ENCODE measurements at regions of chr3 and their contacts with region 1.

Region 1: GRCh38 chr3:52253314-52254304 is 8.1 kb downstream of the PPM1M start:
- DNase-seq: peak; percentile 70 to 97 (median 87)
- ATAC-seq: peak; percentile 86
- H3K4me3 ChIP-seq: peak overlapping the region; percentile 25 to 32
- H3K4me3 Mint-ChIP-seq: peak overlapping the region; percentile 84
- H3K27ac ChIP-seq: peak overlapping the region; percentile 76 to 92
- H3K27ac Mint-ChIP-seq: peak overlapping the region; percentile 100
- H3K4me1 ChIP-seq: peaks cover 96% of the 10 kb centered on the region
- H3K4me1 Mint-ChIP-seq: peaks cover 93% of the 10 kb centered on the region
- H3K27me3 ChIP-seq: no peaks in the 10 kb centered on the region
- H3K27me3 Mint-ChIP-seq: no peaks in the 10 kb centered on the region
- CTCF ChIP-seq: no peak

Region 2: GRCh38 chr3:52014613-52015012 is 239.0 kb before region 1 on chr3:
- CTCF ChIA-PET with region 1: no interaction called
- POLR2A ChIA-PET with region 1: no interaction called
- intact Hi-C with region 1: no loop called
- DNase-seq: no peak
- ATAC-seq: no peak
- H3K4me3 ChIP-seq: no peak overlapping the region
- H3K4me3 Mint-ChIP-seq: no peak overlapping the region
- H3K27ac ChIP-seq: no peak overlapping the region
- H3K27ac Mint-ChIP-seq: no peak overlapping the region
- H3K4me1 ChIP-seq: no peaks in the 10 kb centered on the region
- H3K4me1 Mint-ChIP-seq: no peaks in the 10 kb centered on the region
- H3K27me3 ChIP-seq: no peaks in the 10 kb centered on the region
- H3K27me3 Mint-ChIP-seq: no peaks in the 10 kb centered on the region
- CTCF ChIP-seq: no peak

Region 3: DNA sequence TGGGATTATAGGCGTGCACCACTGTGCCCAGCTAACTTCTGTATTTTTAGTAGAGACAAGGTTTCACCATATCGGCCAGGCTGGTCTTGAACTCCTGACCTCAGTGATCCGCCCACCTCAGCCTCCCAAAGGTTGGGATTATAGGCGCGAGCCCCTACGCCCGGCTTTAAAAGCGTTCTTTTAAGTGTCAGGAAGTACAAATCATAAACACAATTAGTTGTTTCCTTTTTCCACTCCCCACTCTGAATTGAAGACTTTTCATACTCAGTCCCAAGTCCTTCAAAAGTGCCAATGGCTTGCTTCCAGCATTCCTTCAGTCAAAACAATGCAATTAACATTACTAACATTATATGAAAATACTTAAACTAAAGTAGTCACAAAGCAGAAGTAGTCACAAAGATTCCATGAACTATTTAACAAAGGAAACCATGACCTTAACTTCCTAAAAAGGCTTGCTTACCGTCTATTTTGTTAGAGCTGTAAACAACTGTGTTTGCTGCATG is 16.7 kb after region 1 on chr3:
- CTCF ChIA-PET with region 1: interaction called, 622 read pairs
- POLR2A ChIA-PET with region 1: interaction called, 685 read pairs
- intact Hi-C with region 1: loop called in 1 of 2 experiments (anchors 1 kb)
- DNase-seq: no peak
- ATAC-seq: no peak
- H3K4me3 ChIP-seq: peak overlapping the region in 1 of 2 experiments; percentile 10
- H3K4me3 Mint-ChIP-seq: peak overlapping the region; percentile 82
- H3K27ac ChIP-seq: peak overlapping the region; percentile 34 to 68
- H3K27ac Mint-ChIP-seq: peak overlapping the region; percentile 95
- H3K4me1 ChIP-seq: peaks cover 73% of the 10 kb centered on the region
- H3K4me1 Mint-ChIP-seq: peaks cover 86% of the 10 kb centered on the region
- H3K27me3 ChIP-seq: no peaks in the 10 kb centered on the region
- H3K27me3 Mint-ChIP-seq: no peaks in the 10 kb centered on the region
- CTCF ChIP-seq: no peak

Region 4: GRCh38 chr3:52278510-52279069 is 25.0 kb after region 1 on chr3 and contains the start of gene WDR82:
- CTCF ChIA-PET with region 1: interaction called, 622 read pairs
- POLR2A ChIA-PET with region 1: interaction called, 685 read pairs
- intact Hi-C with region 1: loop called (anchors 1 kb)
- DNase-seq: peak; percentile 94 to 99 (median 98)
- ATAC-seq: peak; percentile 77
- H3K4me3 ChIP-seq: peak within 1 kb of the TSS; percentile 65 to 95
- H3K4me3 Mint-ChIP-seq: peak within 1 kb of the TSS; percentile 94
- H3K27ac ChIP-seq: peak within 1 kb of the TSS; percentile 79 to 93
- H3K27ac Mint-ChIP-seq: peak within 1 kb of the TSS; percentile 99
- H3K4me1 ChIP-seq: peaks cover 49% of the 10 kb centered on the region
- H3K4me1 Mint-ChIP-seq: peaks cover 72% of the 10 kb centered on the region
- H3K27me3 ChIP-seq: no peaks in the 10 kb centered on the region
- H3K27me3 Mint-ChIP-seq: no peaks in the 10 kb centered on the region
- CTCF ChIP-seq: peak; percentile 36
- total RNA-seq, gene WDR82: 115 to 117 TPM